CD4-positive, alpha-beta memory T cell (primary cell): ENCODE measurements at regions of chr7 and their contacts with region 1.

Region 1: DNA sequence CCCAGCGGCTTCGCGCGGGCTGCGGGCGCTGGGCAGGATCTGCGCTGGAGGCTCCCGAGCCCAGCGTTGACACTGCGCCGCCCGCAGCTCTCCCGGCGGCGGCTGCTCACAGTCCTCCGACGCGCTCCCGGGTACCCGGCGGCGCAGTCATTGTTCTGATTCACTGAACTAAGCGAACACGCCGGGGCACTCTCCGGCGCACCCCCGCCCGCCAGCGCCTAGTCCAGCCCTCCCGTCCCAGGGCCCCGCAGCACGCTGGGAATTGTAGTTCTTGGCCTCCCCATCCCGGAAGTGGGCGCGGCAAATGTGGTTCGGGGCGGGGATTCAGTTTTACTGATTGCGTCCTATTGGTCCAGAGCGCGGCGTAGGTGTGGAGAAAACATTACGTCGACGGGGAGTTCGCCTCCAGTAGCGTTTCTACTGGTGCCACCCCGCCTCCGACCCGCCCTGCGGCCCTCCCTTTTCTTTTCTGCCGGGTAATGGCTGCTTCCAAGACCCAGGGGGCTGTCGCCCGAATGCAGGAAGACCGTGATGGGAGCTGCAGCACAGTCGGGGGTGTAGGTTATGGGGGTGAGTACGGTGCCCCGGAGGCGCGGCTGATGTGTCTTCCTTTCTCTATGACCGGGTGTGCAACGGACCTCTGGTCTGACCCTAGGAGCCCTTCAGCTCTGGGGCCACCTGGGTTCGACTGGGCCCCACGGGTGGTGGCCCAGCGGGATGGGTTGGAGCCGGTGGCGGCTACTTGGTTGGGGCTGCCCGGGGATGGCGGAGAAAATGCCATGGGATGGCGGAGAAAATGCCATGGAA is at the starts of genes DOCK4 and ZNF277:
- DNase-seq: peak; percentile 98 to 100 (median 99)
- H3K4me3 ChIP-seq: peak within 1 kb of the TSS; percentile 95 to 100
- H3K4me3 Mint-ChIP-seq: peak within 1 kb of the TSS; percentile 92 to 98 (median 96)
- H3K27ac ChIP-seq: peak within 1 kb of the TSS; percentile 71
- H3K27ac Mint-ChIP-seq: peak within 1 kb of the TSS; percentile 93 to 96 (median 94)
- H3K4me1 ChIP-seq: peaks cover 30% of the 10 kb centered on the region
- H3K4me1 Mint-ChIP-seq: peaks cover 30 to 50% (median 36%) of the 10 kb centered on the region in 4 donors
- H3K27me3 ChIP-seq: peaks cover 26% of the 10 kb centered on the region
- H3K27me3 Mint-ChIP-seq: peaks cover 17 to 21% of the 10 kb centered on the region in 2 donors
- total RNA-seq, gene DOCK4: 1.2 to 1.5 TPM
- total RNA-seq, gene ZNF277: 31.0 to 31.4 TPM

Region 2: GRCh38 chr7:112331492-112331891 is 125.1 kb after region 1 on chr7:
- CTCF ChIA-PET with region 1: no interaction called
- POLR2A ChIA-PET with region 1: no interaction called
- intact Hi-C with region 1: no loop called
- DNase-seq: no peak
- H3K4me3 ChIP-seq: no peak overlapping the region
- H3K4me3 Mint-ChIP-seq: no peak overlapping the region
- H3K27ac ChIP-seq: no peak overlapping the region
- H3K27ac Mint-ChIP-seq: no peak overlapping the region
- H3K4me1 ChIP-seq: no peaks in the 10 kb centered on the region
- H3K4me1 Mint-ChIP-seq: no peaks in the 10 kb centered on the region
- H3K27me3 ChIP-seq: no peaks in the 10 kb centered on the region
- H3K27me3 Mint-ChIP-seq: no peaks in the 10 kb centered on the region

Region 3: GRCh38 chr7:112377593-112377992 is 171.2 kb after region 1 on chr7:
- CTCF ChIA-PET with region 1: no interaction called
- POLR2A ChIA-PET with region 1: no interaction called
- intact Hi-C with region 1: loop called (anchors 5 kb)
- DNase-seq: no peak
- H3K4me3 ChIP-seq: no peak overlapping the region
- H3K4me3 Mint-ChIP-seq: no peak overlapping the region
- H3K27ac ChIP-seq: no peak overlapping the region
- H3K27ac Mint-ChIP-seq: no peak overlapping the region
- H3K4me1 ChIP-seq: no peaks in the 10 kb centered on the region
- H3K4me1 Mint-ChIP-seq: peaks cover 0 to 6% (median under 1%) of the 10 kb centered on the region in 4 donors
- H3K27me3 ChIP-seq: no peaks in the 10 kb centered on the region
- H3K27me3 Mint-ChIP-seq: peaks cover 0 to 1% of the 10 kb centered on the region in 2 donors

Region 4: GRCh38 chr7:112449902-112450806 is 243.7 kb after region 1 on chr7 and contains the start of gene IFRD1:
- CTCF ChIA-PET with region 1: no interaction called
- POLR2A ChIA-PET with region 1: interaction called, 39 read pairs
- intact Hi-C with region 1: loop called (anchors 1 kb)
- DNase-seq: peak; percentile 97 to 98 (median 97)
- H3K4me3 ChIP-seq: peak within 1 kb of the TSS; percentile 94 to 100
- H3K4me3 Mint-ChIP-seq: peak within 1 kb of the TSS; percentile 97 to 100 (median 99)
- H3K27ac ChIP-seq: peak within 1 kb of the TSS; percentile 100
- H3K27ac Mint-ChIP-seq: peak within 1 kb of the TSS; percentile 98 to 100 (median 99)
- H3K4me1 ChIP-seq: peaks cover 36% of the 10 kb centered on the region
- H3K4me1 Mint-ChIP-seq: peaks cover 25 to 48% (median 38%) of the 10 kb centered on the region in 4 donors
- H3K27me3 ChIP-seq: no peaks in the 10 kb centered on the region
- H3K27me3 Mint-ChIP-seq: no peaks in the 10 kb centered on the region
- total RNA-seq, gene IFRD1: 54.2 to 57.0 TPM

Region 5: GRCh38 chr7:112939574-112940314 is 733.3 kb after region 1 on chr7:
- CTCF ChIA-PET with region 1: interaction called, 3 read pairs
- POLR2A ChIA-PET with region 1: no interaction called
- intact Hi-C with region 1: loop called (anchors 1 kb)
- DNase-seq: peak; percentile 99 to 100 (median 99)
- H3K4me3 ChIP-seq: peak overlapping the region; percentile 71 to 72
- H3K4me3 Mint-ChIP-seq: peak overlapping the region; percentile 92 to 99 (median 96)
- H3K27ac ChIP-seq: peak overlapping the region; percentile 71
- H3K27ac Mint-ChIP-seq: peak overlapping the region; percentile 90 to 99 (median 97)
- H3K4me1 ChIP-seq: peaks cover 40% of the 10 kb centered on the region
- H3K4me1 Mint-ChIP-seq: peaks cover 31 to 59% (median 43%) of the 10 kb centered on the region in 4 donors
- H3K27me3 ChIP-seq: no peaks in the 10 kb centered on the region
- H3K27me3 Mint-ChIP-seq: peaks cover 0 to 4% of the 10 kb centered on the region in 2 donors